Uterus (tissue), 4 donors: ENCODE measurements at regions of chr6 and their contacts with region 1.

Region 1: DNA sequence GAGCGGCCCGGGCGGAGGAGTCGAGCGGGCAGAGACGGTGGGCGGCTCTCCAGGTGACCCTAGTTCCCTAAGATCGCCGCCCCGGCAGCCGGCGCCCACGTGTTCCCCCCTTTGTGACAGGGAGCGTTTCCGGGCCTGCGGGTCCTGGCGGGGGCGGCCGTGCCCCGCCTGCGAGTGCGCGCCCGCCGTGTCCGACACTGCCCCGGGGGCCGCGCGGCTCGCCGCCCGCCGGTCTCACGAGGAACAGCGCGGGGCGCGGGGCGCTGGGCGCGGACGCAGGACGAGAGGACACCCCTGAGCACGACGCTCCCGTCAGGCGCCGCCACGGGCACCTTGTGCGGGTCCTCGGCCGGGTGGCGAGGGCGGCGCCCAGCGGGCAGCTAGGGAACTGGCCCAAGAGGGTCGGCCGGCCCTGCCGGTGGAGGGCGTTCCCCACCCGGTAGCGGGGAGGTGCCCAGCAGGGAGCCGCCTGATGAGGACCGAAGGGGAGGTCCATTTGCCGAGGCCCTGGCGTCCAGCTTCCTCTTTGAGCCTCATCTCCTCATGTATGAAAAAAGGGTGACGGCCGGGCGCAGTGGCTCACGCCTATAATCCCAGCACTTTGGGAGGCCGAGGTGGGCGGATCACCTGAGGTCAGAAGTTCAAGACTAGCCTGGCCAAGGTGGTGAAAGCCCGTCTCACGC is at the start of gene VARS1:
- DNase-seq: peak; percentile 90 to 91
- H3K4me3 ChIP-seq: peak within 1 kb of the TSS; percentile 73 to 88
- H3K27ac ChIP-seq: peak within 1 kb of the TSS; percentile 90 to 97
- H3K4me1 ChIP-seq: no peaks in the 10 kb centered on the region
- H3K27me3 ChIP-seq: no peaks in the 10 kb centered on the region
- CTCF ChIP-seq: peak; percentile 77 to 99 (median 89)
- POLR2A ChIP-seq: peak; percentile 55 to 72
- total RNA-seq, gene VARS1: 35.6 to 118 (median 53.4) TPM

Region 2: GRCh38 chr6:31739639-31740396 is 55.9 kb before region 1 on chr6 and contains the start of gene MSH5:
- intact Hi-C with region 1: loop called (anchors 10 kb)
- DNase-seq: peak; percentile 99
- H3K4me3 ChIP-seq: peak within 1 kb of the TSS; percentile 60 to 85
- H3K27ac ChIP-seq: peak within 1 kb of the TSS; percentile 71 to 80
- H3K4me1 ChIP-seq: peaks cover 0 to 14% of the 10 kb centered on the region in 2 donors
- H3K27me3 ChIP-seq: no peaks in the 10 kb centered on the region
- CTCF ChIP-seq: no peak
- POLR2A ChIP-seq: peak; percentile 66 to 72
- total RNA-seq, gene MSH5: 16.7 to 41.5 (median 22.1) TPM in 3 of 4 donors, not detected in the other

Region 3: DNA sequence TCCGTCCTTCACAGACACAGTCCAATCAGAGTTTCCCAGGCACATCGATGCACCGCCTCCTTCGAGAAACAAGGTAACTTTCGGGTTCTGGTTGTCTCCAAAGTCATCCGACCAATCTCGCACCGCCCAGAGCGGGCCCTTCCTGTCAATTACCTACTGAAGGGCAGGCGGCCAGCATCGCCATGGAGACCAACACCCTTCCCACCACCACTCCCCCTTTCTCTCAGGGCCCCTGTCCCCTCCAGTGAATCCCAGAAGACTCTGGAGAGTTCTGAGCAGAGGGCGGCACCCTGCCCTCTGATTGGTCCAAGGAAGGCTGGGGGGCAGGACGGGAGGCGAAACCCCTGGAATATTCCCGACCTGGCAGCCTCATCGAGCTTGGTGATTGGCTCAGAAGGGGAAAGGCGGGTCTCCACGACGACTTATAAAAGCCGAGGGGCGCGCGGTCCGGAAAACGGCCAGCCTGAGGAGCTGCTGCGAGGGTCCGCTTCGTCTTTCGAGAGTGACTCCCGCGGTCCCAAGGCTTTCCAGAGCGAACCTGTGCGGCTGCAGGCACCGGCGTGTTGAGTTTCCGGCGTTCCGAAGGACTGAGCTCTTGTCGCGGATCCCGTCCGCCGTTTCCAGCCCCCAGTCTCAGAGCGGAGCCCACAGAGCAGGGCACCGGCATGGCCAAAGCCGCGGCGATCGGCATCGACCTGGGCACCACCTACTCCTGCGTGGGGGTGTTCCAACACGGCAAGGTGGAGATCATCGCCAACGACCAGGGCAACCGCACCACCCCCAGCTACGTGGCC is 31.7 kb after region 1 on chr6 and contains the start of gene HSPA1B:
- intact Hi-C with region 1: no loop called
- DNase-seq: peak; percentile 100
- H3K4me3 ChIP-seq: peak within 1 kb of the TSS; percentile 86 to 89
- H3K27ac ChIP-seq: peak within 1 kb of the TSS; percentile 96 to 99
- H3K4me1 ChIP-seq: peaks cover 5 to 13% of the 10 kb centered on the region in 2 donors
- H3K27me3 ChIP-seq: no peaks in the 10 kb centered on the region
- CTCF ChIP-seq: peak in 2 of 4 experiments; percentile 35 to 44
- POLR2A ChIP-seq: peak; percentile 100
- total RNA-seq, gene HSPA1B: 40.3 to 268 (median 152) TPM

Region 4: DNA sequence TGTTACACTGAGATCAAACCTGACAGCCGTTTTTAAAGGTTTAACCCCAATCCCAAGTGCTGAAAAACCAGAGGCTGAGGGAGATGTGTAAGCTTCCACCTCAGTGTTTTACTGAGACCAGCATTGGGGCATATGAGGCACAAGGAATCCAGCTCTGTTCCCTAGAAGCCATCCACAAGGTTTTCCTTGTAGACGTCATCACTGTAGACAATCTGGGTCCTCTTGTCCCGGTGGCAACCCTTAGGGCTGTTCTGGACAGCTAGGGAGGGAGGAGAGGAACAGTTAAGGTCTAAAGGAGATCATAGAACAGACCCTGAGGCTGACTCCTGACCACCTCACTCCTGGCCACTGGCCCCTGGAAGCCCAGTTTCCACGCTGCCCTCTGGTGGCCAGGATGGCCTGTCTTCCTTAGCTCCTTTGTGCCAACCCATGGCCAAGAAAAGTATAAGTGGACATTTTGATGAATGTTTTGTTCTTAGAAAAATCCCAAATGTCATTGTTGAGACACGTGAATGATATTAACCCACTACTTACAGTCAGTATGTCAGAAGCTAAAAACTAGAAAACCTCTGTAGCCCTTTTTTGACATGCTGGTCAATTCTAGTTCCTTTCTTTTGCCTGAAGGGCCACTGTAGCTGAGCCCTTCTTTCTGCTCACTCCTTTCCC is 156.5 kb after region 1 on chr6:
- intact Hi-C with region 1: no loop called
- DNase-seq: peak; percentile 56 to 62
- H3K4me3 ChIP-seq: no peak overlapping the region
- H3K27ac ChIP-seq: peak overlapping the region; percentile 48 to 53
- H3K4me1 ChIP-seq: peaks cover 0 to 2% of the 10 kb centered on the region in 2 donors
- H3K27me3 ChIP-seq: no peaks in the 10 kb centered on the region
- CTCF ChIP-seq: peak; percentile 63 to 68 (median 66)
- POLR2A ChIP-seq: no peak